ENCODE measurements at regions of chr7 and their contacts with region 1.

Region 1: GRCh38 chr7:47266131-47266706 is 315.7 kb downstream of the TNS3 start:
- DNase-seq: no peak
- H3K4me3 ChIP-seq: no peak overlapping the region
- H3K27ac ChIP-seq: no peak overlapping the region
- H3K4me1 ChIP-seq: peaks cover 0 to 9% (median 0%) of the 10 kb centered on the region in 3 donors
- H3K27me3 ChIP-seq: no peaks in the 10 kb centered on the region
- CTCF ChIP-seq: peak; percentile 83 to 94 (median 92)
- POLR2A ChIP-seq: no peak

Region 2: DNA sequence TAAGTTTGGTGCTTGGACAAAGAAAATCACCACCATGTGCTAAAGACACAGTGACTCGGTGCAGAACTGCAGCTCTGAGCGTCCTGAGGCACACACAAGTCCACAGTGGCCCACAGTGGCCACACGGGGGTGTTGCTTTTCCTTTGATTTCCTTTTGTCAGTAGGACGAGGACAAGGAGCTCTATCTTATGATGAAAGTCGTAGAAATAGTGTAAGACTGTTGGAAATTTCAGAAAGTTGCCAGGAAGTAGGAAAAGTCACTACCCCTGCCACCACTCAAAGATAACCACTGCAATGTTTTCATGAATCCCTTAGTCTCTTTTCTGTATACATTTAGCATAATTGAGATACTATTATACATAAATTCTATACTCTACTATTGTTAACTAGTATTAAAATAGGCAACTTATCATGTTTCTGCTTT is 169.7 kb after region 1 on chr7:
- intact Hi-C with region 1: loop called (anchors 10 kb)
- DNase-seq: no peak
- H3K4me3 ChIP-seq: no peak overlapping the region
- H3K27ac ChIP-seq: no peak overlapping the region
- H3K4me1 ChIP-seq: no peaks in the 10 kb centered on the region
- H3K27me3 ChIP-seq: no peaks in the 10 kb centered on the region
- CTCF ChIP-seq: peak; percentile 46 to 81 (median 66)
- POLR2A ChIP-seq: no peak

Region 3: DNA sequence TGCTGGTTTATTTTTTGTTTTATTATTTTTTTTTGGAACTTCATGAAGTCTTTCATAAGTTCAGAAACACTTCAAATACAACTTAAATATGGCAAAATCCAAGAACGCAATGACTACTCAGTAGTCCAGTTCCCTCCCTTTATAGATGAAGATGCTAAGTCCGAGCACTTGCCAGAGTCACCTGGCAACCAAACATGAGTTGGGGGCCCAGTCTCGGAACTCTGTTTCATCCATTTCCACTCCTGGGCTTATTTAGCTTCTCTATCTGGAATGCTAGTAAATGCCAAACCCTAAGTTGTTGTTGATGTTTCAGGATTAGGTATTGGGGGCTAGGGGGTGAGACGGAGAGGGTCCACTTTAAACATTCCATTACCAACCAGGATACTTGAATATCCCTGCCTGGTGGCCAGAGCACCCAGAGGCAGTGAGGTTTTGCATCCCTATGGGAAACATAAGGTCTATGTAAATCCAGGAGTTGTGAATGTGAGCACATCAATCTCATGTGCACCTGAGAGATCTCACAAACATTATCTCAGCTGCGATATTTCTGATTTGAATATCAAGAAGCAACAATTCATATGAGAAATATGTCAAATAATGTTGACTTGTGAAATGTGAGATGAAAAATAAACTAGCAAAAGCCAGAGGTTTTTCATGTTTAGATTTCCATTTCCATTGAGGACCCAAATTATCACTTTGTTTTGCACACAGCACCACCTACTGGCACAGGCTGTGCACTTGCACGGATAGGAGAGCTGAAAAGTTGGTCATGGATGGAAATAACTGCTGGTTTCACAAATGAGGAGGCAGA is 552.8 kb after region 1 on chr7:
- intact Hi-C with region 1: loop called (anchors 5 kb)
- DNase-seq: no peak
- H3K4me3 ChIP-seq: no peak overlapping the region
- H3K27ac ChIP-seq: no peak overlapping the region
- H3K4me1 ChIP-seq: no peaks in the 10 kb centered on the region
- H3K27me3 ChIP-seq: no peaks in the 10 kb centered on the region
- CTCF ChIP-seq: peak; percentile 86 to 94 (median 89)
- POLR2A ChIP-seq: no peak

Measured in esophagus squamous epithelium (tissue), 5 donors.